Aorta (tissue), 5 donors: ENCODE measurements at regions of chr14 and their contacts with region 1.

Region 1: DNA sequence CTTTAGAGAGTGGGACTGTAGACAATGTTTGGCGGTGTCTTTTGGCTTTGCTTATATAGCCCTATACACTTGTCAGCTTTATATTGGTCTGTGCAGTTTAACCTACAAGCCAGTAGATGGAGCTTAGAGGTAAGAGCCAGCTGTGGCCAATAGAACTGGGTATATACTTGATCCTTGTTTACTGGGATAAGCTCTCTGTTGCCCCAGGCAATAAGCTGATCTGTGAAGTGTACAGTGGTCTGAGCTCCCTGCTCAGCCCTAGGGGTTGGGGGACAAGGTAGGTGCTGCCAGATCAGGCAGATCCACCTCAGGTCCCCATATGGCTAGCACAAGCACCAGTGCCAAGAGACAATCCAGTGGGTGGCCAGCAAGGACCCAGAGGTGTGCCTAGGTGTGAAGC is 434.0 kb downstream of the NOVA1 start:
- DNase-seq: no peak
- ATAC-seq: peak; percentile 52
- H3K4me3 ChIP-seq: no peak overlapping the region
- H3K27ac ChIP-seq: no peak overlapping the region
- H3K4me1 ChIP-seq: no peaks in the 10 kb centered on the region
- H3K27me3 ChIP-seq: no peaks in the 10 kb centered on the region

Region 2: DNA sequence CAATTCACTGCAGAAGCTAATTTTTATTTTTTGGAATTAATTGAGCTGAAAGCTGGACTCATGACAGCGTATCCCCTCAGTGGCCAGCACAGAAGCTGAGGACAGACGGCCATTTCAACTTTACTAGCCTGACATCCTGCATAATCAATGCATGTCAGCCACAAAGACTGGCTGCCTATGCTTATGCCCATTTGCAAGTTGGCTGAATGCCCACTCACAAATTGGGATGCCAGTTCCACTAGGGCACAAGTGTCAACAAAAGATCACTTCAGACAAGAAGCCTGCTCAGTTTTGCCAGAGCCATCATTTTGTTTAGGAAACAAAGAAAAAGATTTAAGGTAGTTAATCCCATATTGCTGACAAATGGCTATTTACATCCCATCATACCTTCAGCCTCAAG is 16.4 kb after region 1 on chr14:
- intact Hi-C with region 1: loop called in 1 of 2 experiments (anchors 2 kb)
- DNase-seq: no peak
- ATAC-seq: no peak
- H3K4me3 ChIP-seq: no peak overlapping the region
- H3K27ac ChIP-seq: no peak overlapping the region
- H3K4me1 ChIP-seq: no peaks in the 10 kb centered on the region
- H3K27me3 ChIP-seq: no peaks in the 10 kb centered on the region